Activated CD8-positive, alpha-beta T cell treated with anti-CD3 and anti-CD28 coated beads for 36 hours (primary cell): ENCODE measurements at regions of chr4 and their contacts with region 1.

Region 1: DNA sequence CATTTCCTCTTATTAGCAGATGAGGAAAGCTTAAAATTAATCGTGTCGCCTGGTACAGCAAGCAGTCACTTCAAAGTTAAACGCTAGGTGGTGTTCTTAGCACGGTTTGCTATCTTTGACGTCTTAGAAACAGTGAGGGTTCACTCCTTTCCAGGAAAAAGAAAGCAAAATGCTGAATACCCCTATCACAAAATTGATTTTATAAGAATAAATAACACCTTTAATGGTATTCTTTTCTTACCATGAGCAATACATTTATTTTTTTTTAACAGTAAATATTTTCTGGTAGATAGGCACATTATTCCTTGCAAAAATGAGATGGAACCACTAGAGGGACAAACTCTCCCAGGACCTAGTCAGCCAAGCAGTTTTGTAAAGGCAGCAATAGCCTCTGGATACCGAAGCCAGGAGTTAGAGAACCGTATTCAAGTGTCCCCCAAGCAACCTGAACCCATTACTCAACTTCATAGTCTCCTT is 153.9 kb downstream of the KDR start:
- DNase-seq: peak; percentile 22
- ATAC-seq: peak; percentile 51
- H3K4me3 Mint-ChIP-seq: no peak overlapping the region
- H3K27ac Mint-ChIP-seq: no peak overlapping the region
- H3K4me1 Mint-ChIP-seq: no peaks in the 10 kb centered on the region
- H3K27me3 Mint-ChIP-seq: peaks cover 11% of the 10 kb centered on the region
- CTCF ChIP-seq: peak; percentile 71

Region 2: DNA sequence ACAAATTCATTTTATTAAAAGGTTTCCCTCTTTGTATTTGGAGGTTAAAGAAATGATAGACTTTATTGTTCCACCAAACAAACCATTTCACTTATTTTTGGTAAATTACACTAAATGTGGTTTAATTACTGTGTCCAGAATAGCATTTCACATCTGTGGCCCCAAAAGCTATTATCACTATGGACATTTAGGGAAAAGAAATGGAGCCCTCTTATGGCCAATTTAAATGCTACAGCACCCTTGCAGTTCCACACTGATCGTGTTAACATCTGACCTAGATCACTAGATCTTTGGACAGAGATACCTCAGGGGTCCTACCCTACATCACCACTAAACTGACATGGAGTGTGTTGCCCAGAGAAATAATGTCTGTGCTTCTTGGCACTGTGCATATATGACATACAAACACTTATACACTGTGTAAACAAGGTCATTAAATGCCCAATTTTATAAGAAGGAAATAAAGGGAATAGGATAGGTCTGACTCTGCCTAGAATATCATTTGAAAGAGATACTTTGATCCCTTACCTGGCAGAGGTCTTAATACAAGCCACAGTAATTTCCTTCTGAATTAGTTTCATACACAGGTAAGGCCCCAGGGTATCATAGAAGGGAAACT is 10.0 kb before region 1 on chr4:
- CTCF ChIA-PET with region 1: interaction called, 19 read pairs
- POLR2A ChIA-PET with region 1: no interaction called
- intact Hi-C with region 1: no loop called
- DNase-seq: no peak
- ATAC-seq: peak; percentile 60
- H3K4me3 Mint-ChIP-seq: no peak overlapping the region
- H3K27ac Mint-ChIP-seq: no peak overlapping the region
- H3K4me1 Mint-ChIP-seq: peaks cover 15% of the 10 kb centered on the region
- H3K27me3 Mint-ChIP-seq: no peaks in the 10 kb centered on the region
- CTCF ChIP-seq: peak; percentile 38

Region 3: DNA sequence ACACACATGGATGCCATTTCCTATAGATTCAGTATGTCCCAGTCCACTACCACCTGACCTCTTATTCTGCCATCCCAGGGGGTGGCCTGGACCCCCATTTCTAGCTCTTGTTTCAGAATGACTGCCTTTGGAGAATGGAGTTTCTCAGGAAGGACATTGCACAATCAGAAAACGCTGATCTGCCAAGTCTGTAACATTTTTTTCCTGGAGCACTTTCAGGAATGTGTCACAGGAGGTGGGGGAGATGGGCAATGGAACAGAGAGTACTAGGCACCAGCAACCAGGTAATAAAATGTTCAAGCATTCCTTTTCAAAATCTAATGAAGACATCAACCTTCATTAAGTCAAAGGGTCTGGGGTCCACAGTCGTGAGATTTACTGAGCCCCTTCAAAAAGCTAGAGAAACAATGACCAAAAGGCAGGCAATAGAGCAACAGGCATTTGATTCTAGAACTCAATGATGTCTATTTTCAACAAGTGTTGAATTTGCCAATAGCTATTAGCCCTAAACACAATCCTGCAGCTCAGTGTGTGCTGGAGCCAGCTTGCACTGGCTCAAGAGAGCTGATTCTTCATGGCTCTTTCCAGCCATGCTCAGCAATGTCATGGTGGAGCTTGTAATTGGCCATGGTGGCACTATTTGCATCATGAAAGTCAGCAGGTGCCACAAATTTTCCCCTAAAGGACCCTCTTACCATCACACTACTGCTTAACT is 66.8 kb after region 1 on chr4:
- CTCF ChIA-PET with region 1: no interaction called
- POLR2A ChIA-PET with region 1: no interaction called
- intact Hi-C with region 1: no loop called
- DNase-seq: no peak
- ATAC-seq: no peak
- H3K4me3 Mint-ChIP-seq: no peak overlapping the region
- H3K27ac Mint-ChIP-seq: no peak overlapping the region
- H3K4me1 Mint-ChIP-seq: no peaks in the 10 kb centered on the region
- H3K27me3 Mint-ChIP-seq: peaks cover 9% of the 10 kb centered on the region
- CTCF ChIP-seq: no peak

Region 4: GRCh38 chr4:55143863-55144262 is 172.4 kb after region 1 on chr4:
- CTCF ChIA-PET with region 1: no interaction called
- POLR2A ChIA-PET with region 1: no interaction called
- intact Hi-C with region 1: no loop called
- DNase-seq: no peak
- ATAC-seq: no peak
- H3K4me3 Mint-ChIP-seq: no peak overlapping the region
- H3K27ac Mint-ChIP-seq: no peak overlapping the region
- H3K4me1 Mint-ChIP-seq: no peaks in the 10 kb centered on the region
- H3K27me3 Mint-ChIP-seq: peaks cover 7% of the 10 kb centered on the region
- CTCF ChIP-seq: no peak

Region 5: DNA sequence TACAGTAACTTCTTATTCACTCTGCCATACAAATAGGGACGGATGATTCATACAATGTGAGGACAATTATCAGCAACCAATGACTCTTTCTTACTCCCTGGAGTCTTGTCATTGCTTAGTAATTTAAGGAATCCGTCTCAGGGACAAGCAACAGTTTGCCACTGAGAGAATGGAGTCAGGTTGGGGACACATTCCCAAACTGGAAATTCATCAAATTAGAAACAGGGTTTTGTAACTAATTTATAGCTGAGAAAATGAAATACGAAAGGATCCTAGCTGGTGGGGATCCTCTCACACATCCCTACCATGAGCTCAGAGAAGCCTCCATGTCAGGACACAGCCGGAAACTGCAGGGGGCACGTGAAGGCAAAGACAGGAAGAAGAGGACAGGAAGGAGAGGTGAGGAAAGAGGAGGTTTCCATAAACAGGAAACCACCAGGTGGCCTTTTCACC is 204.3 kb after region 1 on chr4:
- CTCF ChIA-PET with region 1: no interaction called
- POLR2A ChIA-PET with region 1: no interaction called
- intact Hi-C with region 1: loop called (anchors 10 kb)
- DNase-seq: no peak
- ATAC-seq: no peak
- H3K4me3 Mint-ChIP-seq: no peak overlapping the region
- H3K27ac Mint-ChIP-seq: no peak overlapping the region
- H3K4me1 Mint-ChIP-seq: peaks cover 1% of the 10 kb centered on the region
- H3K27me3 Mint-ChIP-seq: no peaks in the 10 kb centered on the region
- CTCF ChIP-seq: no peak

Region 6: GRCh38 chr4:55312489-55313101 is 341.1 kb after region 1 on chr4:
- CTCF ChIA-PET with region 1: interaction called, 16 read pairs
- POLR2A ChIA-PET with region 1: no interaction called
- intact Hi-C with region 1: no loop called
- DNase-seq: peak; percentile 55
- ATAC-seq: peak; percentile 64
- H3K4me3 Mint-ChIP-seq: no peak overlapping the region
- H3K27ac Mint-ChIP-seq: no peak overlapping the region
- H3K4me1 Mint-ChIP-seq: peaks cover 6% of the 10 kb centered on the region
- H3K27me3 Mint-ChIP-seq: no peaks in the 10 kb centered on the region
- CTCF ChIP-seq: peak; percentile 59

Region 7: GRCh38 chr4:55321707-55322264 is 350.3 kb after region 1 on chr4:
- CTCF ChIA-PET with region 1: interaction called, 18 read pairs
- POLR2A ChIA-PET with region 1: no interaction called
- intact Hi-C with region 1: loop called (anchors 5 kb)
- DNase-seq: peak; percentile 88
- ATAC-seq: peak; percentile 55
- H3K4me3 Mint-ChIP-seq: no peak overlapping the region
- H3K27ac Mint-ChIP-seq: no peak overlapping the region
- H3K4me1 Mint-ChIP-seq: peaks cover 30% of the 10 kb centered on the region
- H3K27me3 Mint-ChIP-seq: peaks cover 3% of the 10 kb centered on the region
- CTCF ChIP-seq: peak; percentile 81